Posterior vena cava (tissue), 2 donors: ENCODE measurements at regions of chr9 and their contacts with region 1.

Region 1: DNA sequence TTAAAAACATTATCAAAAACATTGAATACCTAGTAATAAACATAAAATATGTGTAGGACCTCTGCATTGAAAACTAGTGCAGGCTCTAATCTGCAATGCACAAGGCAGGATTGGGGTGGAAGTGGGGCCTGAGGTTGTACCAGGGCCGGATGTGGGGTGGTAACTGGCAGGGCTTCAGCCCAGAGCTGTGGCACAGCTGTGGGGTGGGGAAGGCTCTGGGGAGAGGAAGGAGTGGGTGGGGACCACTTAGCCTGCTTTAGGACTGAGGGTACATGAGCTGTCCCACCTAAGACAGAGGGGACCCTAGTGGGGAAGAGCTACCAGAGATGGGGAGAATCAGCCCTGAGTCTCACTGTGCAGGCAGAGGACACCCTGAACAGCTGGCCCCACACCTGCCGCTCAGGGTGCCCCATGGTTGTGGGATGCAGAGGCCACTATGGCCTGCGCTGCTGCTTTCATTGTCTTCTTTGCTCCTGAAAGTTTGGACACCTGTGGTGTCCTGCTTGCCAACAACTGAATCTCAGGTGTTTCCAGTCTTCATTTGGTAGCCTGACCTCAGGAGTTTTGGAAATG is 311.4 kb downstream of the TLE4 start:
- DNase-seq: no peak

Region 2: DNA sequence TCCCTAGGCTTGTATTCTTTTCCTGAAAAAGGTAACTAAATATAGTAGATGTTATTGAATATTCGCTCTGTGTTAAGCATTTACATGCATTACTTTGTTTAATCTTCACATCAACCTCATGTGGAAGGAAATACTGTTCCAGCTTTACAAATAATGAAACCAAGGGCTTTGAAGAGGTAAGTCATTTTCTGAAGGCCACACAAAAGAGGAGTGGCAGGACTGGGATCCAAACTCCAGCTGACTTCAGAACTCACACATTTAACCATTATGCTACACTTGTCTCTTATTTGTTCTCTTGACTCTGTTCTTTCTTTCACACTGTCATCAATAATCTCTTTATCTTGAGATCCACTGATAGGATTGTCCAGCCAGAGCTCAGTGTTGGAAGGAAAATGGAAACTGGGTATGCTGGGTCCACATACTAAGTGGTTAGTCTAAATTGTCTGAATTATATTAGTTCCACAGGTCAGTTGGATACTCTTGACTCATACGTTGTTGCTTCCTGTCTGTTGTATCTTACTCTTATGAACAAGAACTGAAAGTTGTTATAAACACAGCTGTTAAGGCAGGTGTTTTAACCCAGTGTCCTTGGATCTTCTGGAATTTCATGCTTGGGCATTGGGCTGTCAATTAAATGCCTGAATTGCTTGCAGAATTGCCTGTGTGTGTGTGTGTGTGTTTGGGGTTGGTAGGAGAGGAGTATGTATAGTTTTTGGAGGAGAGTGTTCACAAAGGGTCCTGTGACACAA is 245.8 kb before region 1 on chr9:
- intact Hi-C with region 1: no loop called
- DNase-seq: no peak

Region 3: GRCh38 chr9:79896390-79896980 is 13.3 kb after region 1 on chr9:
- intact Hi-C with region 1: loop called in 1 of 2 experiments (anchors 1 kb)
- DNase-seq: no peak